ENCODE measurements at regions of chr2 and their contacts with region 1.

Region 1: GRCh38 chr2:152635635-152636298 is 81.5 kb downstream of the PRPF40A start:
- DNase-seq: peak; percentile 68
- H3K4me3 ChIP-seq: no peak overlapping the region
- H3K27ac ChIP-seq: no peak overlapping the region
- H3K4me1 ChIP-seq: no peaks in the 10 kb centered on the region
- H3K27me3 ChIP-seq: no peaks in the 10 kb centered on the region
- CTCF ChIP-seq: peak; percentile 86

Region 2: DNA sequence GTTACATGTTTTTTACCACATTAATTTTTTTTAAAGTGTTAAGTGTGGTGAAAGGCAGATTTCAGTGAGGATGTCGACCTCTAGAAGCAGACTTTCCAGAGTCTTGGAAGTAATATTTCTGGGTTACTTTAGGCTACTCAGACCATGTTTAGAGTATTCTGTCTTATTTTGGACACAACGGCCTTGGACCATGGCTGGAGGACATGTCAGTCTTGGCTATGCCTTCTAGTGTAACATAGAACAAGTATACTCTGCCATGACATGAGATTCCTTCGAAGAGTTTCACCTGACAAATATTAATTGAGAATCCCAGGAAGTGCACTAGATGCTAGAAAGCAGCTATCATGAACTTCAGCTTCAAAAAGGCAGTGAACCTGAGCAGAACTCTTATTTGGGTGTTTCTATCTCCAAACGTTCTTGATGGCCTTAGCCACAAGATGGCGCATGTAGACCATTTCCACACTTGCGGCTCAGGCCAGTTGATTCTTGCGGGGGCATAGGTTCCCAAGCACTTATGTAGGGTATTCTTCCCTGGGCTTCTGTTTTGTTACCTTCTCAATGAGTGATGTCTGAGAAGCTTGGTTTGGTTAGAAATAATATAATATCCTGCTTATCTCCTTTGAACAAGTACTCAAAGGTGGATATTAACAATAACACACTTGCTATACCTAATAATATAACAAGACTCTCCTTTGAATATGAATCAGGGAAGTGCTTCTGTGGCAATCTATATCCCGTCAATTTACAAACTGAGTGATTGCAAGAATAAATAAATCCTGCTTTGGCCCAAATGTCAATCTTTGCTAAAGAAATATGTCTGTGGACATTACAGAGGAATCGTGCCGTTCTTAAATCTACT is 598.9 kb before region 1 on chr2:
- CTCF ChIA-PET with region 1: no interaction called
- POLR2A ChIA-PET with region 1: no interaction called
- intact Hi-C with region 1: loop called (anchors 1 kb)
- DNase-seq: peak; percentile 80
- H3K4me3 ChIP-seq: no peak overlapping the region
- H3K27ac ChIP-seq: no peak overlapping the region
- H3K4me1 ChIP-seq: no peaks in the 10 kb centered on the region
- H3K27me3 ChIP-seq: no peaks in the 10 kb centered on the region
- CTCF ChIP-seq: peak; percentile 84

Region 3: GRCh38 chr2:152189622-152190495 is 445.9 kb before region 1 on chr2:
- CTCF ChIA-PET with region 1: no interaction called
- POLR2A ChIA-PET with region 1: interaction called, 3 read pairs
- intact Hi-C with region 1: loop called (anchors 1 kb)
- DNase-seq: peak; percentile 84
- H3K4me3 ChIP-seq: no peak overlapping the region
- H3K27ac ChIP-seq: no peak overlapping the region
- H3K4me1 ChIP-seq: no peaks in the 10 kb centered on the region
- H3K27me3 ChIP-seq: no peaks in the 10 kb centered on the region
- CTCF ChIP-seq: peak; percentile 89

Measured in A673 (cell line).